ENCODE measurements at regions of chr20 and their contacts with region 1.

Region 1: DNA sequence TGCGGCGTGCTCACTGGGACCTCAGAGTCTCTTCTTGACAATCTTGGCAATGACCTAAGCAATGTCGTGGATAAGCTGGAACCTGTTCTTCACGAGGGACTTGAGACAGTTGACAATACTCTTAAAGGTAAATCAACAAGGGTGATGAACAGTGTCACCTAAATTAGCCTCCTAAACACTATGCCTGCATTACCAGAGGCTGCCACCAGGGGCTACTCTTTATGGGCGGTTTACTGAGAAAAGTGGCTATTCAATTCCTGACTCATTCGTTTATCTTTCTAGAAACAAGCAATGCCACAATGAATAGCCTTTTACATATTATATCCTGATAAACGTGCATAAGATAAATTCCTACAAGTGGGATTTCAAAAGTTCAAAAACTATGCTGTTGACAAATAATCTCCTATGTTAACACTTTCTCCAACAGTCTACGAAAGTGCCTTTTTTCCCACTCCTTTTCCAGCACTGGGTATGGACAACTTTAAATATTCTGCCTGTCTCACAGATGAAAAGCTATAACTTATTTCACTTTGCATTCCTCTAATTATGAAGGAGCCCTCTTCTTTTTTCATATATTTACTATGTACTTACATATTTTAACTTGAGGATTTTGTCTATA is 1.3 kb downstream of the BPIFA2 start:
- DNase-seq: no peak
- ATAC-seq: no peak
- H3K4me3 ChIP-seq: no peak overlapping the region
- H3K27ac ChIP-seq: no peak overlapping the region
- H3K4me1 ChIP-seq: no peaks in the 10 kb centered on the region
- H3K27me3 ChIP-seq: peaks cover 0 to 2% (median 0%) of the 10 kb centered on the region in 3 donors
- CTCF ChIP-seq: peak in 1 of 5 experiments; percentile 13
- POLR2A ChIP-seq: no peak

Region 2: DNA sequence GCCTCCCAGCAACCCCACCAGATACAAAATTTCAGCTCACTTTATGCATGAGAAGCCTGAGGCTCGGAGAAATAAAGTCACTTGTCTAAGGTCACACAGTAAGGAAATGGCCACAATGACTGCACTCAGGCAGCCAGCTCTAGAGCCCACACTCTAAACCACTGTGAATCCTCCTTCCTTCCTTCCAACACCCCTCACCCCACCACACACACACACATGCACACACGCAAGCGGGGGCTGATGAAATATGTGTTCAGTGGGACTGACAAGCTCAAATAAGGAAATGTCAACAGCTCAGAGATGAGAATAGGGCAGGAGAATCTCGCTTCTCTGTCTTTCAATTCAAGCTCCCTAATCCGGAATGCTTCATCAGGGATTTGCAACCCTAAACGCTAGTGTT is 60.6 kb after region 1 on chr20:
- in situ Hi-C with region 1: loop called in 1 of 4 experiments (anchors 10 kb)
- intact Hi-C with region 1: no loop called
- DNase-seq: no peak
- ATAC-seq: no peak
- H3K4me3 ChIP-seq: no peak overlapping the region
- H3K27ac ChIP-seq: no peak overlapping the region
- H3K4me1 ChIP-seq: no peaks in the 10 kb centered on the region
- H3K27me3 ChIP-seq: peaks cover 0 to 9% (median 0%) of the 10 kb centered on the region in 3 donors
- CTCF ChIP-seq: no peak
- POLR2A ChIP-seq: no peak